Activated CD8-positive, alpha-beta T cell treated with anti-CD3 and anti-CD28 coated beads, Interleukin-2, amount 10 ng/mL, durations not matched to agents 7 days and 5 days (primary cell): ENCODE measurements at regions of chr3 and their contacts with region 1.

Region 1: DNA sequence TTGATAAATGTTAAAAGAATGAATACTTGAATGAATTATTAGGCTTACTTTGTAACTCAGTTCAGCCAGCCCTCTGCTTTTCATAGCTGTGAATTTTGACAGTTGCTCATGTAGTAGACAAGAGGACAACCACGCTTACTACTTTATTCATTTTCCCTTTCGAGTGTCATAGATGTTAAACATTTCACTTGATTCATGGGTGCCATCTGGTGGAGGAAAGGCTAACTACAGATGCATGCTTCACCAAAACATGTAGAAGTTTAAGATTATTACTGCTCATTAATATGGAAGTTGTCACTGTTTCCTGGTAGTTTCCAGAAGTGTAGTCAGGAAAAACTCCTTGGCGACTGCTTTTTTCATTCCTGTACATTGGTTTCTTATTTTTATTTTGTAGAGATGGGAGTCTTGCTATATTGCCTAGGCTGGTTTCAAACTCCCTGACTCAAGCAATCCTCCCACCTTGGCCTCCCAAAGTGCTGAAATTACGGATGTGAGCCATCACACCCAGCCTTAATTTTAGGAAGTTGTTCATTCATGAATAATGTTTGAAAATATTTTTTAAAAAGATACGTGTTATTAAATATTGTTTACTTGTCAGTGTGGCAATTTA is 163.2 kb downstream of the B3GALNT1 start:
- DNase-seq: peak; percentile 83
- ATAC-seq: peak; percentile 68
- H3K4me3 Mint-ChIP-seq: no peak overlapping the region
- H3K27ac Mint-ChIP-seq: no peak overlapping the region
- H3K4me1 Mint-ChIP-seq: no peaks in the 10 kb centered on the region
- H3K27me3 Mint-ChIP-seq: peaks cover 3% of the 10 kb centered on the region

Region 2: GRCh38 chr3:160686955-160687535 is 254.9 kb before region 1 on chr3:
- CTCF ChIA-PET with region 1: interaction called, 35 read pairs
- POLR2A ChIA-PET with region 1: no interaction called
- DNase-seq: no peak
- ATAC-seq: no peak
- H3K4me3 Mint-ChIP-seq: no peak overlapping the region
- H3K27ac Mint-ChIP-seq: no peak overlapping the region
- H3K4me1 Mint-ChIP-seq: no peaks in the 10 kb centered on the region
- H3K27me3 Mint-ChIP-seq: no peaks in the 10 kb centered on the region

Region 3: GRCh38 chr3:160707187-160707794 is 234.7 kb before region 1 on chr3:
- CTCF ChIA-PET with region 1: interaction called, 37 read pairs
- POLR2A ChIA-PET with region 1: no interaction called
- DNase-seq: peak; percentile 45
- ATAC-seq: peak; percentile 57
- H3K4me3 Mint-ChIP-seq: no peak overlapping the region
- H3K27ac Mint-ChIP-seq: no peak overlapping the region
- H3K4me1 Mint-ChIP-seq: no peaks in the 10 kb centered on the region
- H3K27me3 Mint-ChIP-seq: peaks cover 26% of the 10 kb centered on the region

Region 4: GRCh38 chr3:160928287-160928686 is 13.7 kb before region 1 on chr3:
- CTCF ChIA-PET with region 1: interaction called, 24 read pairs
- POLR2A ChIA-PET with region 1: no interaction called
- DNase-seq: no peak
- ATAC-seq: no peak
- H3K4me3 Mint-ChIP-seq: no peak overlapping the region
- H3K27ac Mint-ChIP-seq: no peak overlapping the region
- H3K4me1 Mint-ChIP-seq: no peaks in the 10 kb centered on the region
- H3K27me3 Mint-ChIP-seq: peaks cover 21% of the 10 kb centered on the region

Region 5: GRCh38 chr3:161069511-161070263 is 127.7 kb after region 1 on chr3:
- CTCF ChIA-PET with region 1: no interaction called
- POLR2A ChIA-PET with region 1: no interaction called
- DNase-seq: no peak
- ATAC-seq: peak; percentile 76
- H3K4me3 Mint-ChIP-seq: peak overlapping the region; percentile 12
- H3K27ac Mint-ChIP-seq: peak overlapping the region; percentile 35
- H3K4me1 Mint-ChIP-seq: peaks cover 80% of the 10 kb centered on the region
- H3K27me3 Mint-ChIP-seq: no peaks in the 10 kb centered on the region

Region 6: GRCh38 chr3:161108840-161109239 is 166.8 kb after region 1 on chr3:
- CTCF ChIA-PET with region 1: no interaction called
- POLR2A ChIA-PET with region 1: no interaction called
- DNase-seq: no peak
- ATAC-seq: no peak
- H3K4me3 Mint-ChIP-seq: no peak overlapping the region
- H3K27ac Mint-ChIP-seq: no peak overlapping the region
- H3K4me1 Mint-ChIP-seq: peaks cover 31% of the 10 kb centered on the region
- H3K27me3 Mint-ChIP-seq: peaks cover 25% of the 10 kb centered on the region

Region 7: DNA sequence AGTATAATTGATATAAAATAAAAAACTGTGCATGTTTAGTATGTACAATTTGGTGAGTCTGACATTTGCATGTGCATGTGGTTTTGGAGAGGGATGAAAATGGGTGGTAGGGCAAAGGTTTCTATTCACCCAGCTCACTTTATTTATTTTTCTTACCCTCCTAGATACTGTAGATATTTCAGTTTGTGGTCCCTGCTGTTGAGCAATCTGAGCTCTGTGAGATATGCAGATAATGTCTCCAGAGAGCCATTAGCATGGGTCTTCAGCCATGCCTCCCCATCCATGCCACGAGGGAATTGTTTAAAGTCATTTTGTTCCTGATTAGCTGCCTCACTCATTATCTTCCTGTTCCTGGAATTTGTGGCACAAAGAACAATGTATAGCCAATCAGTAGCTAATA is 207.5 kb after region 1 on chr3:
- CTCF ChIA-PET with region 1: no interaction called
- POLR2A ChIA-PET with region 1: no interaction called
- DNase-seq: no peak
- ATAC-seq: no peak
- H3K4me3 Mint-ChIP-seq: no peak overlapping the region
- H3K27ac Mint-ChIP-seq: no peak overlapping the region
- H3K4me1 Mint-ChIP-seq: no peaks in the 10 kb centered on the region
- H3K27me3 Mint-ChIP-seq: peaks cover 10% of the 10 kb centered on the region